ENCODE measurements at regions of chr13 and their contacts with region 1.

Region 1: DNA sequence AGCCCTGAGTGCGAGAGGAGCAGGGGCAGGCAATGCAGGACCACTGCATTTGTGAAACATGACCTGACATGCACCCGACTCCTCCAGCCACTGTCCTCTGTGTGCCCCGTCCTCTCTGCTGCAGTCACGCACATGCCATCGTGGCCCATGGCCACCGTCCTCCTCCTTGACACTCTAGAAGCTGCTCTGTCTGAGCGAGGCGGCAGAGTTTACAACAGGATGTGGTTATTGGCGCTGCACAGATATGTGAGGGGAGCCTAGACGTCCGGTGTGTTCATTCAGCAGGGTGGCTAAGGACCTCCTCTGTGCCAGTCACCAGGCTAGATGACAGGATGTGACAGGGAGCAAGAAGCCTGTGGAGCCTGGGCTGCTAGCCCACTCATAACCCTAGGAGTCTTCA is 277.8 kb downstream of the FOXO1 start:
- DNase-seq: peak; percentile 36 to 88 (median 82)
- ATAC-seq: peak; percentile 96
- H3K4me3 ChIP-seq: peak overlapping the region; percentile 80
- H3K4me3 Mint-ChIP-seq: peak overlapping the region; percentile 80 to 95 (median 88)
- H3K27ac ChIP-seq: peak overlapping the region; percentile 78
- H3K27ac Mint-ChIP-seq: peak overlapping the region; percentile 95 to 100 (median 98)
- H3K4me1 ChIP-seq: peaks cover 16 to 23% of the 10 kb centered on the region in 2 donors
- H3K4me1 Mint-ChIP-seq: peaks cover 35 to 76% (median 60%) of the 10 kb centered on the region in 7 donors
- H3K27me3 ChIP-seq: no peaks in the 10 kb centered on the region
- H3K27me3 Mint-ChIP-seq: no peaks in the 10 kb centered on the region

Region 2: DNA sequence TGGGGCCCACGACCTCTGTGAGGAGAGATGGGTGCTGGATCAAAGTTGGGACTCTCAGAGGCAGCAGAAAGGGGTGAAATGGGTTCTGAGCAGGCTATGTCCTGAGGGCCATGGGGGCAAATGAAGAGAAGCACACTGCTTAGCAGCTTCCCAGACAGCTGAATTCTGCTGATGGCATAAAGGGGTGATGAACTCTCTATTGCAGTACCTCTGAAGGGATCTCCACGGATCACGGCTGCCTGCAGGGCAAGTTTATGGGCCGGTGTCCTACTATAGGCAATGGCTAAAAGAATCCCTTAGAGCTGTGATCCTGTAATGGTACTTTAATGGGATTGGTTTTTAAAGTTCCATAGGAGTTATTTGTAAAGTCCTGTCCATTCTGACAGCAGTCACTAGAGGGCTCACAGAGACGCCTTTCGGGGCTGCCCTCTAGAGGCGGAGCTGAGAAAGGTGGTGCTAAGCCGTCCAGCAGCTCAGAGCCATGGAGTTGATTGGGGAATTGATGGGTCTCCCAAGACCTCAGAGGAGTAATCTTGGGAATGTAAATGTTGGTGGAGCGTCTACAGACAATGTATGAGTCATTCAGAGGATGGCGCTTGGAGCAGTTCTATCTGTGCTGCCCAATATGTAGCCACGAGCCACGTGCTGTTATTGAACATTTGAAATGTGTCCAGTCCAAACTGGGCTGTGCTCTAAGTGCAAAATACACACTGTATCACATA is 445.9 kb before region 1 on chr13:
- CTCF ChIA-PET with region 1: no interaction called
- POLR2A ChIA-PET with region 1: no interaction called
- intact Hi-C with region 1: loop called in 1 of 2 experiments (anchors 5 kb)
- DNase-seq: peak; percentile 41 to 71 (median 63)
- ATAC-seq: peak; percentile 98
- H3K4me3 ChIP-seq: no peak overlapping the region
- H3K4me3 Mint-ChIP-seq: peak overlapping the region in 2 of 10 donors; percentile 2 to 71
- H3K27ac ChIP-seq: no peak overlapping the region
- H3K27ac Mint-ChIP-seq: peak overlapping the region in 3 of 9 donors; percentile 1 to 63 (median 8)
- H3K4me1 ChIP-seq: no peaks in the 10 kb centered on the region
- H3K4me1 Mint-ChIP-seq: peaks cover 4 to 16% (median 11%) of the 10 kb centered on the region in 7 donors
- H3K27me3 ChIP-seq: no peaks in the 10 kb centered on the region
- H3K27me3 Mint-ChIP-seq: peaks cover 0 to 3% (median 0%) of the 10 kb centered on the region in 5 donors

Region 3: DNA sequence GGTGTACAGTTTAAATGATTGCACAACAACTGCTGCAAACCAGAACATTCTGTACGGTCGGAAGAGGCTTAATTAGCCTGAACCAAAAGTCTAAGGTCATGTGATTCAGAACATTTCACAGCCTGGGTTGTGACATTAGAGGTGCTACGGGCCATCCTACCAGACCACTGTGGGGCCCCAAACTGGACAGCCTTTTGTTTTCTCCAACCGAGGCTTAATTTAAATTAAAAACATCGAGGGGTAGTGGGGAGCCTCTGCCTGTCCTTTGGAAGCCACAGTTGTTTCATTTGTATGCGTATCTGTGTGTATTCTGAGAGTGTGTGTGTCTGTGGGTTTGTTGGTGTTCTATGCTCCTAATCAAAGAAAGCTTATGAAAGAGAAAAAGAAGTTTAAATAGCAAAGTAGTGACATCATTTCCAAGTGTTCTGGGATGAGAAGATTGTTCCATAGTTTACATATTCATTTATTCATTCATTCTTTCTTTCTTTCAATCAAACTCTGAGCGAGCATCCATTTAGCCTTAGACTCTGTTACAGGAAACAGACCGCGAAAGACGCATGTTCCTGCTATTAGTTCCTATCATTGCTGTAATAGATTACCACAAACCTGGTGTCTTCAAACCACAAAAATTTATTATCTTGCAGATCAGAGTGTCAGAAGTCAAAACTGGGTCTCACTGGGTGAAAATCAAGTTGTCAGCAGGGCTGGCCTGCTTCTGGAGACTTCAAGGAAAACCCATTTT is 167.0 kb before region 1 on chr13:
- CTCF ChIA-PET with region 1: no interaction called
- POLR2A ChIA-PET with region 1: no interaction called
- intact Hi-C with region 1: loop called in 1 of 2 experiments (anchors 1 kb)
- DNase-seq: peak in 7 of 9 donors; percentile 61 to 86 (median 77)
- ATAC-seq: peak; percentile 88
- H3K4me3 ChIP-seq: peak overlapping the region; percentile 27
- H3K4me3 Mint-ChIP-seq: peak overlapping the region; percentile 32 to 73 (median 66)
- H3K27ac ChIP-seq: peak overlapping the region; percentile 59
- H3K27ac Mint-ChIP-seq: peak overlapping the region; percentile 74 to 96 (median 90)
- H3K4me1 ChIP-seq: peaks cover 31 to 37% of the 10 kb centered on the region in 2 donors
- H3K4me1 Mint-ChIP-seq: peaks cover 22 to 70% (median 49%) of the 10 kb centered on the region in 7 donors
- H3K27me3 ChIP-seq: no peaks in the 10 kb centered on the region
- H3K27me3 Mint-ChIP-seq: no peaks in the 10 kb centered on the region

Region 4: DNA sequence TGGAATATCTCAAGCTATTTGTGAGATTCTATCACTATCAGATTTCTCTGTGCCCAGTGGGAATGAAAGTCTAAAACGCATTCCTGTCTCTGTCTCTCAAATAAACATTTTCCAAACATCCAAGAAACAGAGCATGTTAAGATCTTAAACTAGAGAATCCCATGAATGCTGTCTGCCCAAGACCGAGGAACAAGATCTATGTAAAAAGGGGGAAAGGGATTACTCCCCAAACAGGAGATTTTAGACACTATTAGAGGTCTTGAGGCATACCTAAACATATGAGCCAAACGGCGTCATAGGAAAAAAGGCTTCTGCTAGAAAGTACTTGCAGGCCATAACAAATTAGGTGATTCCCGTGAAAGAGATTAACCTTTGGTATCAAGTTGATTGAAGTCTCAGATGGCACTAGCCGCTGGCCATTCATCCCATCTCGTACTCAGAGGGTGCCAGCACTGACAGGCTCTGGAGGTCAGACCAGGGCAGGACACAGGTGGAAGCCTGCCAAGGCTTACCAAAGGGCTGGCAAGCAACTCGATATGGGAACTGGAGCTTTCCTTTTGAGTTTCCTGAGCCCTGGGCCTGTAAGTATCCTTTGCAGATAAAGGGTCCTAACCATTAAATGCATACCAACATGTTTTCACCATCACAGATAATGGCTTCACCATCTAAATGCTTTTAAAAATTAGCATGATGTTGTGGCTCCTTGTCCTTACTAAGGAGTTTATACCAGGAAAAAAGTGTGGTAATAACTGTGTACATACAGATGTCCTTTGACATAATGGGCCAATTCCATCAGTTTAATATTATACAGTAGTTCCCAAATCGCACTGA is 52.6 kb after region 1 on chr13:
- CTCF ChIA-PET with region 1: no interaction called
- POLR2A ChIA-PET with region 1: no interaction called
- intact Hi-C with region 1: loop called in 1 of 2 experiments (anchors 1 kb)
- DNase-seq: no peak
- ATAC-seq: no peak
- H3K4me3 ChIP-seq: no peak overlapping the region
- H3K4me3 Mint-ChIP-seq: no peak overlapping the region
- H3K27ac ChIP-seq: no peak overlapping the region
- H3K27ac Mint-ChIP-seq: no peak overlapping the region
- H3K4me1 ChIP-seq: peaks cover 4 to 24% of the 10 kb centered on the region in 2 donors
- H3K4me1 Mint-ChIP-seq: peaks cover 16 to 33% (median 28%) of the 10 kb centered on the region in 7 donors
- H3K27me3 ChIP-seq: no peaks in the 10 kb centered on the region
- H3K27me3 Mint-ChIP-seq: no peaks in the 10 kb centered on the region

Region 5: DNA sequence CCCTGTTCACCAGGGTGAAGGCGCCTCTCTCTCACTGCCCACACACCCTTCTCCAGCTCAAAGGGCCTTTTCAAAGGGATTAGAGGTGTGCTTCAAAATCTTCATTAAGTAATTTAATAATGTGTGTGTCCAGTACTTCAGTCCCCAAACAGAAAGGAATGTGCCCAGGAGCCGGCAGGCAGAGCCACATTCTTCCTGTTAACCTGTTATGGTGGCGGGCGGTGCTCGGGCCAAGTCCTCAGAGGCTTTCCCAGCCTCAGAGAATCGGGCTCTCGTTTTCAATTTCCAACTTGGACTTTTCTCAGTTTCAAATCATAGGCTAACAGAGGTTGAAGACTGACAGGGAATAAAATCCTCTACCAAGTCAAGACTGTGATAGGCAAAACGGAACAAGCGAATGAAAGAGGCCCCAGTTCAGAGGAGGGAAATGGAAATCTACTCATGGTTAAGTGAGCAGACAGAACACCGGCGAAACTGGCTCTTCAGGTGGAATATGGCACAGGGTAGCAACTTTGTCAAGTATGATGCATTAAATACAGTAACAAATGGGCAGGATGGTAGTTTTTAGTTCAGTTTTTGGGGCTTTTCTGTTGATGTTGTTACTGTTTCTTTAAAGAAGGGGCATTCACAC is 209.2 kb after region 1 on chr13:
- CTCF ChIA-PET with region 1: no interaction called
- POLR2A ChIA-PET with region 1: no interaction called
- intact Hi-C with region 1: loop called in 1 of 2 experiments (anchors 5 kb)
- DNase-seq: no peak
- ATAC-seq: no peak
- H3K4me3 ChIP-seq: no peak overlapping the region
- H3K4me3 Mint-ChIP-seq: peak overlapping the region; percentile 23 to 77 (median 64)
- H3K27ac ChIP-seq: no peak overlapping the region
- H3K27ac Mint-ChIP-seq: peak overlapping the region; percentile 54 to 90 (median 83)
- H3K4me1 ChIP-seq: peaks cover 43 to 92% of the 10 kb centered on the region in 2 donors
- H3K4me1 Mint-ChIP-seq: peaks cover 66 to 100% (median 93%) of the 10 kb centered on the region in 7 donors
- H3K27me3 ChIP-seq: no peaks in the 10 kb centered on the region
- H3K27me3 Mint-ChIP-seq: no peaks in the 10 kb centered on the region

Region 6: GRCh38 chr13:41132512-41133152 is 744.0 kb after region 1 on chr13 and contains the start of gene KBTBD6:
- CTCF ChIA-PET with region 1: no interaction called
- POLR2A ChIA-PET with region 1: no interaction called
- intact Hi-C with region 1: loop called in 1 of 2 experiments (anchors 5 kb)
- DNase-seq: peak; percentile 76 to 93 (median 87)
- ATAC-seq: peak; percentile 98
- H3K4me3 ChIP-seq: peak within 1 kb of the TSS; percentile 77
- H3K4me3 Mint-ChIP-seq: peak within 1 kb of the TSS; percentile 94 to 99 (median 98)
- H3K27ac ChIP-seq: peak within 1 kb of the TSS; percentile 67
- H3K27ac Mint-ChIP-seq: peak within 1 kb of the TSS; percentile 91 to 97 (median 93)
- H3K4me1 ChIP-seq: peaks cover 15 to 24% of the 10 kb centered on the region in 2 donors
- H3K4me1 Mint-ChIP-seq: peaks cover 32 to 60% (median 54%) of the 10 kb centered on the region in 7 donors
- H3K27me3 ChIP-seq: no peaks in the 10 kb centered on the region
- H3K27me3 Mint-ChIP-seq: no peaks in the 10 kb centered on the region
- total RNA-seq, gene KBTBD6: 3.9 to 9.2 (median 7.7) TPM

Measured in naive thymus-derived CD4-positive, alpha-beta T cell (primary cell).